PC-9 (cell line): ENCODE measurements at regions of chr9 and their contacts with region 1.

Region 1: DNA sequence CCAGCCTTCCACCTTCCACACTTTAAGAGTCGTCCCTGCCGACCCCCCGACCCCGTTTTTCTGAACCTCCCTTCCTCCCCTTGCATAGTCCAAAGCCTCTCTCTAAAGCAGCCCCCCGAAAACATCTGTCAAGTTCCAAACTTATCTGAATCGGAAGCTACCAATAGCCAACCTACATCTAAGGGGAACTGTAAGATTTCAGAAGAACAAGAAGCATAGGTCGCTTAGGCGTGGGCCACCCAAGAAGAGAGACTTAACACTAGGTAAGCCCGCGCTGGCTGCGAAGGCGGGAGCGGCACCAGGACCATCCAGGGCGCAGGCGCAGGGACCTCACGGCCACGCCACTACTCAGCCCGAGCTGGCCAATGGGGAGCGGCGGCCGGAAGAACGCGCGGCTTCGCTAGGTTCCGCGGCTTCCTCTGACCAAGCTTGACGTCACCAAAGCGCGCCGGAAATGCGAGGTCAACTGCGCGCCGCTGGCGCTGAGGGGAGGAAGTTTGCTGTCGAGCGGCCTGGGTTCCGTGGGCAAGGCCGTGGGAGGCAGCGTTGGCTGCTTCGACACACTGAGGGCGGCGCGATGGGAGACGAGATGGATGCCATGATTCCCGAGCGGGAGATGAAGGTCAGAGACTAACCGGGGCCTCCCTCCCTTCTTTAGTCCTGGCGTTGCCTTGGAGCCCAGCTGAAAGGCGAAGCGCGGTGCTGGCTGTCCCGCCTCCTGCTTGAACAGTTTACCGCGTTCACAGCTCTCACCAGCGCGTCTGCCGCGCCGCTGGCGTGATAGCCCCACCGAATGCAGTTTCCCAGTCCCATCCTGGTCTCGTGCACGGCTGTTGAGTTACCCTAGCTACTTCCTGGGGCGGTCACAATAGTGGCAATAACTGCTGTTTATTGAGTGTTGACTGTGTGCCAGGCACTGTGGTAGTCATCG is at the start of gene NUP214:
- DNase-seq: peak; percentile 92 to 98
- H3K4me3 ChIP-seq: peak within 1 kb of the TSS; percentile 91
- H3K27ac ChIP-seq: peak within 1 kb of the TSS; percentile 76
- H3K4me1 ChIP-seq: peaks cover 10% of the 10 kb centered on the region
- H3K27me3 ChIP-seq: no peaks in the 10 kb centered on the region
- CTCF ChIP-seq: no peak
- total RNA-seq, gene NUP214: 49.6 and 59.0 TPM in 2 replicates

Region 2: DNA sequence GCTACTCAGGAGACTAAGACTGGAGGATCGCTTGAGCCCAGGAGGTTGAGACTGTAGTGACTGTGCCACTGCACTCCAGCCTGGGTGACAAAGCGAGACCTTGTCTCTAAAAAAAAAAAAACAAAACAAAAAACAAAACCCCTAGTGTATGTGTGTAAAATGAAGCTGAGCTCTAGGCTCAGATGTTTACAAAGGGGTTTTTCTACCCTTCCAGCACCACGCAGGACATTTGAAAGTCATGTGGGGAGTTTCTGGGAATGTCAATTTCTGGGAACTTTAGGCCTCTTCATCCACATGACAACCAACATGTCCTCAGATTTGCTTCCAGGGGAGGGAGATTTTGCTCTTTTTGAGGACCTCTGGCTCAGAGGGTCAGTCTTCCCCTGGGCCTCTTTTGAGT is 71.5 kb before region 1 on chr9:
- CTCF ChIA-PET with region 1: interaction called, 16 read pairs
- POLR2A ChIA-PET with region 1: no interaction called
- intact Hi-C with region 1: loop called (anchors 1 kb)
- DNase-seq: no peak
- H3K4me3 ChIP-seq: no peak overlapping the region
- H3K27ac ChIP-seq: no peak overlapping the region
- H3K4me1 ChIP-seq: no peaks in the 10 kb centered on the region
- H3K27me3 ChIP-seq: no peaks in the 10 kb centered on the region
- CTCF ChIP-seq: no peak

Region 3: GRCh38 chr9:131111186-131111853 is 14.1 kb before region 1 on chr9:
- CTCF ChIA-PET with region 1: no interaction called
- POLR2A ChIA-PET with region 1: interaction called, 22 read pairs
- intact Hi-C with region 1: no loop called
- DNase-seq: no peak
- H3K4me3 ChIP-seq: no peak overlapping the region
- H3K27ac ChIP-seq: no peak overlapping the region
- H3K4me1 ChIP-seq: no peaks in the 10 kb centered on the region; the same call in 1 of the 2 replicates
- H3K27me3 ChIP-seq: no peaks in the 10 kb centered on the region
- CTCF ChIP-seq: no peak